ENCODE measurements at regions of chr17 and their contacts with region 1.

Region 1: DNA sequence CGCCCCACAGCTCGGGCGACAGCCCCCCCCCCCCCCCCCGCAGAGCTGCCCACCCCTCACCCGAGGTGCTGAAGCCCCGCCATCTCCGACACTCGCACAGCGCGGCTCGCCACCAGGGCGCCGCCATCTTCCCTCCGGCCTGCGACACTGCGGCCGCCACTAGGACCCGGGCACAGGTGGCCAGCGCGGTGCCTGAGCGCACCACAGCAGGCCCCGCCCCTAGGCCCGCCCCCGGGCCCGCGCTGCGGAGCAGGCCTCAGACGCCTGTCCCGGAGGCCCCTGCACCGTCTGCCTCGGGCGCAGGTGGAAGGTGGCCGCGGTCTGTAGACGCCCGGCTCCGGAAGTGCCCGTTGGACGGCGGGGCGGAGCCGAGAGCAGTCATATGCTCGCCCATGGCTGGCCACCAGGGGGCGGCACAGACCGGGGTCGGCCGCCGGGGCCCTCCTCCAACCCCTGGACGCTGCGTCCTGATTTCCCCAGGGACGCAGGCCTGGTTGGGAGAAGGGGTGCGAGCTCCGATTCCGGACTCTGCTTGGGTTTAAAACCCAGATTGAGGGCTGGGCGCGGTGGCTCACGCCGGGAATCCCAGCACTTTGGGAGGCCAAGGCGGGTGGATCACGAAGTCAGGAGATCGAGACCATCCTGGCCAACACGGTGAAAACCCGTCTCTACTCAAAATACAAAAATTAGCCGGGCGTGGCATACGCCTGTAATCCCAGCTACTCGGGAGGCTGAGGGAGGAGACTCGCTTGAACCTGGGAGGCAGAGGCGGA is at the start of gene MRPL38:
- DNase-seq: peak; percentile 73 to 93 (median 88)
- H3K4me3 ChIP-seq: peak within 1 kb of the TSS; percentile 52 to 96 (median 86)
- H3K27ac ChIP-seq: peak within 1 kb of the TSS; percentile 85 to 99 (median 96)
- H3K27me3 ChIP-seq: no peaks in the 10 kb centered on the region
- CTCF ChIP-seq: peak; percentile 95 to 100 (median 99)
- total RNA-seq, gene MRPL38: 65.1 to 138 (median 98.8) TPM

Region 2: GRCh38 chr17:75720725-75721462 is 184.0 kb before region 1 on chr17 and contains the start of gene ITGB4:
- intact Hi-C with region 1: no loop called
- DNase-seq: peak in 7 of 10 donors; percentile 10 to 80 (median 52)
- H3K4me3 ChIP-seq: peak within 1 kb of the TSS; percentile 29 to 73 (median 55)
- H3K27ac ChIP-seq: peak within 1 kb of the TSS in 56 of 59 donors; percentile 12 to 95 (median 83)
- H3K27me3 ChIP-seq: peaks cover 0 to 36% (median 11%) of the 10 kb centered on the region in 45 donors
- CTCF ChIP-seq: peak in 3 of 56 donors; percentile 14 to 19 (median 16)
- total RNA-seq, gene ITGB4: 27.8 to 292 (median 83.1) TPM

Region 3: GRCh38 chr17:75940724-75941441 is 35.9 kb after region 1 on chr17 and contains the start of gene FBF1:
- intact Hi-C with region 1: loop called (anchors 2 kb)
- DNase-seq: peak; percentile 91 to 99 (median 96)
- H3K4me3 ChIP-seq: peak within 1 kb of the TSS; percentile 50 to 99 (median 88)
- H3K27ac ChIP-seq: peak within 1 kb of the TSS in 54 of 59 donors; percentile 3 to 93 (median 77)
- H3K27me3 ChIP-seq: no peaks in the 10 kb centered on the region
- CTCF ChIP-seq: peak in 53 of 56 donors; percentile 15 to 68 (median 44)
- total RNA-seq, gene FBF1: 16.8 to 50.0 (median 27.8) TPM

Region 4: GRCh38 chr17:75978938-75979704 is 74.2 kb after region 1 on chr17 and contains the starts of genes ACOX1 and TEN1:
- intact Hi-C with region 1: loop called in 1 of 2 experiments (anchors 5 kb)
- DNase-seq: peak; percentile 93 to 98 (median 96)
- H3K4me3 ChIP-seq: peak within 1 kb of the TSS; percentile 68 to 99 (median 91)
- H3K27ac ChIP-seq: peak within 1 kb of the TSS; percentile 89 to 100 (median 99)
- H3K27me3 ChIP-seq: no peaks in the 10 kb centered on the region
- CTCF ChIP-seq: peak in 52 of 56 donors; percentile 15 to 72 (median 51)
- total RNA-seq, gene ACOX1: 34.9 to 82.1 (median 62.5) TPM
- total RNA-seq, gene TEN1: 4.0 to 20.6 (median 9.1) TPM

Region 5: GRCh38 chr17:76005263-76006149 is 100.6 kb after region 1 on chr17:
- intact Hi-C with region 1: loop called (anchors 1 to 2 kb)
- DNase-seq: peak in 8 of 10 donors; percentile 41 to 70 (median 66)
- H3K4me3 ChIP-seq: no peak overlapping the region
- H3K27ac ChIP-seq: peak overlapping the region in 39 of 59 donors; percentile 2 to 73 (median 49)
- H3K27me3 ChIP-seq: no peaks in the 10 kb centered on the region
- CTCF ChIP-seq: peak; percentile 60 to 88 (median 77)

Region 6: GRCh38 chr17:76296186-76296585 is 391.3 kb after region 1 on chr17:
- intact Hi-C with region 1: loop called in 1 of 2 experiments (anchors 5 kb)
- DNase-seq: no peak
- H3K4me3 ChIP-seq: no peak overlapping the region
- H3K27ac ChIP-seq: no peak overlapping the region
- H3K27me3 ChIP-seq: no peaks in the 10 kb centered on the region
- CTCF ChIP-seq: no peak